Colonic mucosa (tissue), 4 donors: ENCODE measurements at regions of chr3 and their contacts with region 1.

Region 1: DNA sequence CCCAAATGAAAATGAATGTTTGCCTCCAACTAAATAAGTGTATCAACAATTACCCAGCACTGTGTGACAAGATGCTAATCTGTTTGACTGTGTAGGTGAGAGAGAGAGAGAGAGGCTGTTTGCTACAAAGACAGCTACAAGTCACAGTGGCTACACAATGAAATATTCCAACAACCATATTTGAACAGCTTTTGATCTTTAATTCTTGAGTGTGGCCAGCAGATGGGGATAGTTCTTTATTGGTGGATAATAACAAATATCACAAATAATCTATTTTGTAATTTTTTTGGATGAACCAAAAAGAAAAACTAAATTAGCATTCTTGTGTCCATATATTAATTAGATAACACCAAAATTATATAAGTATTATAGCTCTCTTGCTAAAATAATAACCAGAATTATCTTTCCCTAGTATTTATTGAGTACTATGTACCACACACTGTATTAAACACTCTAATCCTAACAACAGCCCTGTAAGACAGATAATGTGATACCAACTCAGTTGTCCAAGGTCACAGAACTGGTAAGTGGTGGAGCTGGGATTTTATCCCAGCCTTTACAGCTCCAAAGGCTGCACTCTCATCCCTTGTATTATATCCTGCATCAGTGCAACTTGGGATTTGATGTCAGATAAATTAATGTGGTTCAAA is 61.9 kb upstream of the C3orf80 start:
- DNase-seq: no peak
- H3K4me3 ChIP-seq: no peak overlapping the region
- H3K27ac ChIP-seq: no peak overlapping the region
- H3K4me1 ChIP-seq: no peaks in the 10 kb centered on the region
- H3K27me3 ChIP-seq: no peaks in the 10 kb centered on the region
- CTCF ChIP-seq: peak; percentile 34

Region 2: DNA sequence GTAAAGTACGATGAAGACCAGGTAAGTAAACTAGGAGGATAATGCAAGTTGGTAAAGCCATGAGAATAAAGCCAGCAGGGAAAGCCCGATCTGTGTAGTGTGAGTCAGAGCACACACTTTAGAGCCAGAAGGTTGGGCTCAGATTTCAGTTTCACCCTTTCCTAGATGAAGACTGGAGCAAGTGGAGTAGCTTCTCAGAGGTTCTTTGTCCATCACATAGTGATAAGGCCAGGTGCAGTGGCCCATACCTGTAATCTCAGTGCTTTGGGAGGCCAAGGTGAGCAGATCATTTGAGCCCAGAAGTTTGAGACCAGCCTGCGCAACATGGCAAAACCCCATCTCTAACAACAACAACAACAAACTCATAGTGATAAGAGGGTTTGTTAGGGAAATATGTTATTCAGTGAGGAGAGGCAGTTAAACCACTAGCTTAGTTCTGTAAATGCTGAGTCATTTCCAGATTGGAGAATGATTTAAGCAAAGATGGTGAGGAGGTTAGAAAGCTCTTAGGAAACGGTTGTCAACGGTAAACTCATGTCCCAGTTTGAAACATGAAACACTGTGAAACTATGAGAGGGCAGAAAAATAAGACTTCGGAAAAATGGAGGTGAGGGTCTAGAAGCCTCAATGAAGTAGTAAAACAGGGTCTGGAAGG is 135.7 kb before region 1 on chr3:
- intact Hi-C with region 1: loop called (anchors 5 kb)
- DNase-seq: no peak
- H3K4me3 ChIP-seq: no peak overlapping the region
- H3K27ac ChIP-seq: no peak overlapping the region
- H3K4me1 ChIP-seq: no peaks in the 10 kb centered on the region
- H3K27me3 ChIP-seq: no peaks in the 10 kb centered on the region
- CTCF ChIP-seq: no peak

Region 3: DNA sequence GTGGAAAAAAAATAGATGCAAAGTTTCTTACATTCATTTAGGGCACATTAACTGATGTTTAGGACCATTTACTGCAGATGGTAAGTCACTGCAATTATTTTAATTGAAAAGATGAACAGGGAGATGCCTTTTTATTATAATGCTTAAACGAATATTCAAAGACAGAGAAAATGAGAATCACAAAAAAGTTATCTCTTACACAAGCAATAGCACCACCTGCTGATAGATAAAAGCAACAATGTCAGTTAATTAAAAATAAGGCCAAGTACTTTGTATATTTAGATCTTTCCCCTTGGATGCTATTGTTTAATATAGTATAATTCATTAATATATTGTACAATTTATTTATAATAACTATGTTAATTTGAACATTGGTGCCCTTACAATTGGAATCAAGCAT is 179.8 kb after region 1 on chr3:
- intact Hi-C with region 1: loop called (anchors 5 kb)
- DNase-seq: no peak
- H3K4me3 ChIP-seq: no peak overlapping the region
- H3K27ac ChIP-seq: no peak overlapping the region
- H3K4me1 ChIP-seq: no peaks in the 10 kb centered on the region
- H3K27me3 ChIP-seq: no peaks in the 10 kb centered on the region
- CTCF ChIP-seq: peak; percentile 19

Region 4: GRCh38 chr3:160413613-160414248 is 250.4 kb after region 1 on chr3:
- intact Hi-C with region 1: loop called (anchors 2 kb)
- DNase-seq: peak; percentile 64
- H3K4me3 ChIP-seq: no peak overlapping the region
- H3K27ac ChIP-seq: no peak overlapping the region
- H3K4me1 ChIP-seq: no peaks in the 10 kb centered on the region
- H3K27me3 ChIP-seq: no peaks in the 10 kb centered on the region
- CTCF ChIP-seq: peak; percentile 90

Region 5: DNA sequence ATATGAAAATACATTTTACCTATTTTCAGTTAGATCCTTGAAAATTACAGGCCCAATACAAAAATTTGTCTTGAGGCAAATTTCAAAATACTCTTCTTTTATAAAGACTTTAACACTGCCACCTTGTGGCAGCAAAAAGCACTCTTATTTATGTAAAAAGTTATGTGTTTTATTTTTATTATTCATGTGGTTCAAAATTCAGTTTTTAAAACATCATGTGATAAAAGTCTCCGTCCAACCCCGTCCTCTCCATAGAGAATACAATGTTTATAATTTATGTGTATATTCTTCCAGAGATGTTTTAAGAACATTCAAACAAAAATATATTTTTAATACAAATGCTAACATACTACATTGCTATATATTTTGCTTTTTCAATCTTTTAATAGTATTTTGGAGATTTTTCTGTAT is 323.1 kb after region 1 on chr3:
- intact Hi-C with region 1: loop called (anchors 10 kb)
- DNase-seq: no peak
- H3K4me3 ChIP-seq: peak overlapping the region; percentile 12
- H3K27ac ChIP-seq: no peak overlapping the region
- H3K4me1 ChIP-seq: no peaks in the 10 kb centered on the region
- H3K27me3 ChIP-seq: no peaks in the 10 kb centered on the region
- CTCF ChIP-seq: peak; percentile 56